ENCODE measurements at regions of chr2 and their contacts with region 1.

Region 1: GRCh38 chr2:105521205-105521604 is 122.4 kb upstream of the FHL2 start:
- DNase-seq: peak in 2 of 9 experiments; percentile 29 to 50
- ATAC-seq: no peak
- H3K4me3 ChIP-seq: no peak overlapping the region
- H3K4me3 Mint-ChIP-seq: no peak overlapping the region
- H3K27ac ChIP-seq: no peak overlapping the region
- H3K27ac Mint-ChIP-seq: no peak overlapping the region
- H3K4me1 ChIP-seq: no peaks in the 10 kb centered on the region
- H3K4me1 Mint-ChIP-seq: no peaks in the 10 kb centered on the region
- H3K27me3 ChIP-seq: no peaks in the 10 kb centered on the region
- H3K27me3 Mint-ChIP-seq: no peaks in the 10 kb centered on the region
- CTCF ChIP-seq: peak; percentile 74

Region 2: GRCh38 chr2:105287692-105288091 is 233.5 kb before region 1 on chr2:
- CTCF ChIA-PET with region 1: no interaction called
- POLR2A ChIA-PET with region 1: no interaction called
- intact Hi-C with region 1: loop called in 1 of 2 experiments (anchors 10 kb)
- DNase-seq: peak in 4 of 9 experiments; percentile 22 to 53 (median 34)
- ATAC-seq: no peak
- H3K4me3 ChIP-seq: no peak overlapping the region
- H3K4me3 Mint-ChIP-seq: no peak overlapping the region
- H3K27ac ChIP-seq: no peak overlapping the region
- H3K27ac Mint-ChIP-seq: no peak overlapping the region
- H3K4me1 ChIP-seq: no peaks in the 10 kb centered on the region
- H3K4me1 Mint-ChIP-seq: no peaks in the 10 kb centered on the region
- H3K27me3 ChIP-seq: no peaks in the 10 kb centered on the region
- H3K27me3 Mint-ChIP-seq: no peaks in the 10 kb centered on the region
- CTCF ChIP-seq: peak; percentile 36

Region 3: GRCh38 chr2:105510761-105511610 is 10.2 kb before region 1 on chr2:
- CTCF ChIA-PET with region 1: interaction called, 10 read pairs
- POLR2A ChIA-PET with region 1: no interaction called
- intact Hi-C with region 1: no loop called
- DNase-seq: no peak
- ATAC-seq: no peak
- H3K4me3 ChIP-seq: no peak overlapping the region
- H3K4me3 Mint-ChIP-seq: no peak overlapping the region
- H3K27ac ChIP-seq: no peak overlapping the region
- H3K27ac Mint-ChIP-seq: no peak overlapping the region
- H3K4me1 ChIP-seq: no peaks in the 10 kb centered on the region
- H3K4me1 Mint-ChIP-seq: no peaks in the 10 kb centered on the region
- H3K27me3 ChIP-seq: no peaks in the 10 kb centered on the region
- H3K27me3 Mint-ChIP-seq: peaks cover 8% of the 10 kb centered on the region
- CTCF ChIP-seq: no peak